ENCODE measurements at regions of chr12 and their contacts with region 1.

Region 1: DNA sequence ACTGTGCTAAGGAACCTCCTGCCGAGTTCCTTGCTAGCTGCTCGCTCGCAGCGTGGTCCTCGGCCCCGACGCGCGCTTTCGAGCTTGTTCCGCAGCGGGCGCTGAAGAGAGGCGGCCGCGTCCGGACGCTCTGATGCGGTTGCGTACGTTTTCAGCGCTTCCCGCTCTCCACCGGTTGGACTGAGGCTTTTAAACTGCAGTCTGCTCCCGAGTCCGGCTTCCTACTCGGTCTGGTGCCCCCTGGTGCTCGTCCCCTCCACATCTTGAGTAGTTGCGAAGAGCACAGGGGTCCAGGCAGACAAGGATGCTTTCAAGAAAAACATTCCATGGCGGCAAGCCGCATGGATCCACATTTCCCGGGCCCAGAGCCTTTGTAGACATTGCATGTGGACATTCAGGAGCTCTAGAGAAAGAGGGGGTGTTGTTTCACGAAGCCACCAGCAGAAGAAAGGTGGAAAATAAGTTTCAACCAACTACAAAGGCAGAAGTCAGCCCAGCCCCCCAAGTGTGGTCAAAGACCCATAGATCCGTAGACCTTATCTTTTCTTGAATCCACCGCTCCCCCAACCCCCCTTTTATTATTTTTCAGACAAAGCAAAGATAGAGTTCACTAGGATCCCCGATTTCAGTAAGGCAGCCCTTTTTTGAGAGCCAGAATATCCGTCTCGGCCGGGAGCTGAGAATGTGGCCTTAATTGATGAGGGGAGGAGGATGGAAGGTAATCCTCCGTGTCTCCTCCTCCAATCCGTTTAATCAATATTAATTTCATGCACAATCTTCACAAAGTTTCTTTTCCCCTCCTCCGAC is 984 bp upstream of the WNK1 start:
- DNase-seq: peak; percentile 87
- H3K4me3 Mint-ChIP-seq: no peak overlapping the region
- H3K27ac Mint-ChIP-seq: no peak overlapping the region
- H3K4me1 Mint-ChIP-seq: peaks cover 28% of the 10 kb centered on the region
- H3K27me3 Mint-ChIP-seq: no peaks in the 10 kb centered on the region

Region 2: GRCh38 chr12:389139-390096 is 362.0 kb before region 1 on chr12 and contains the start of gene KDM5A:
- intact Hi-C with region 1: loop called (anchors 1 kb)
- DNase-seq: peak; percentile 86
- H3K4me3 Mint-ChIP-seq: peak within 1 kb of the TSS; percentile 94
- H3K27ac Mint-ChIP-seq: peak within 1 kb of the TSS; percentile 95
- H3K4me1 Mint-ChIP-seq: peaks cover 24% of the 10 kb centered on the region
- H3K27me3 Mint-ChIP-seq: no peaks in the 10 kb centered on the region
- total RNA-seq, gene KDM5A: 76.4 and 77.9 TPM in 2 replicates

Region 3: DNA sequence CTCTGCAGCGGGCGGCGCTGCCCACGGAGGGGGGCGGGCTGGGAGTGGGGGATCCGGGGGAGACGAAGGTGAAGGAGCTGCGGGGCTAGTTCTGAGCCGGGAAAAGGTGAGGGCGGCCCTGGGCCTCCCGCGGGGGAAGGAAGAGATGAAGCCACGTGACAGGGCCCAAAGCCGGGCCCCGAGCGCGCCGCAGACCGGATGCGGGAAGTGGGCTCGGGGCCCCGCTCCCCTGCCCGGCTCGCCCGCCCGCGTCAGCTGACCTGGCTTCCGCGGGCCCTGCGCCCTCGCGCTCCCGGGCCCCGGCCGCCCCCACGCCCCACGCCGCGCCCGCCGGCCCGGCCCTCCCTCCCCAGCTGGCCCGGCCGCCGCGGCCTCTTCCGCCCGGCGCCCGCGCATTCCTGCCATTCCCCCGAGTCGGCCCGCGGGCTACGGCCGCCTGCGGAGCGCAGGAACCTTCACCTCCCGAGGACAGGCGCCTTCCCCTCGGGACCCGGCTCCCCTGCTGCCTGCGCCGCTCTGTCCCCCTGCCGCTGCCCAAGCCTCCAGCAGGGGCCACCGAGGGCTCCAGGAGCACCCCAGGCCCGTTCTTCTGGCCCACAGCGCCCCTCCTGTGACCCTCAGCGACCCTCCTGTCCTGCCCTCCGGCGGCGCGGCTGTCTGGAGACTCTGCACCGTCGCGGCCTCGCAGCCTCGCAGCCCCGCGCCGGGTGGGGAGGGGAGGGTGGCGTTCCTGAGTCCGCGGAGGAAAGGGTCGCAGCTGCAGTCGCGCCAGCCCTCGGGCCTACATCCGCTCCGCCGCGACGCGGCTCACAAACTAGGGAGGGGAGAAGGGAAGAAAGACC is 108.5 kb before region 1 on chr12:
- intact Hi-C with region 1: loop called (anchors 1 kb)
- DNase-seq: peak; percentile 77
- H3K4me3 Mint-ChIP-seq: peak overlapping the region; percentile 68
- H3K27ac Mint-ChIP-seq: peak overlapping the region; percentile 81
- H3K4me1 Mint-ChIP-seq: peaks cover 43% of the 10 kb centered on the region
- H3K27me3 Mint-ChIP-seq: no peaks in the 10 kb centered on the region

Region 4: DNA sequence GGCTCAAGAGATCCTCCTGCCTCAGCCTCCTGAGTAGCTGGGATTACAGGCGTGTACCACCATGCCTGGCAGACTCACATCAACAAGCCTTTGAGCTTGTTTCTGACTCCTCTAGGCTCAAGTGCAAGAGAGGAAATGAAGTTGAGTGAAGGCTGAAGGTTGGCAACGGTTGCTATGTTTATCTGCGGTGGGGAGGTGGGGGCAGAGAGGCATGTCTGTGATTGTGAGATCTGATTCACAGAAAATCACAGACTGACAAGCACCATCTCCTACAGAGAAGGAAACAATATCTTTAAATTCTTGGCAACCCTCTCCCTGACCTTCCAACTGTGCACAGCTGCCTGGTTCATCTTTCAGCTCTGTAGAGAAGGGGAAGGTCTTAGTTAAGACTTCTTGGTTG is 66.0 kb before region 1 on chr12:
- intact Hi-C with region 1: loop called (anchors 2 kb)
- DNase-seq: peak; percentile 78
- H3K4me3 Mint-ChIP-seq: peak overlapping the region; percentile 17
- H3K27ac Mint-ChIP-seq: peak overlapping the region; percentile 81
- H3K4me1 Mint-ChIP-seq: peaks cover 32% of the 10 kb centered on the region
- H3K27me3 Mint-ChIP-seq: peaks cover 3% of the 10 kb centered on the region

Region 5: DNA sequence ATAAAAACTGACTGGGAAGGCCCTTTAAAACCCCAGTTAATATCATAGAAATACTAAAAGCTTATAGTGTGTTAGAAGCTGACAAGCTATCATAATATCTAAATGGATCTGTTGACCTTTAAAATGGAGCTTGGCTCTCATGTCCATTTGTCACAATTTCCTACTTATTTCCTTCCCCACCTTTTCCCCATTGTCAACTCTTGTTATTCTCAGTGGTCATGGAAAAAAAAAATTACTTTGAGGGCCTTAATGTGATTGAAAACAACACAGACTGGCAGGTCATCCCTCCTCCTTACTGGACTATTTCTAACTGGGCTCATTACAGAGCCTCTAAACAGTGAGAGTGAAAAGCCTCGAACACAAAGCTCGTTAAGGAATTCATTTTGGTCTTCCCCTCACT is 12.7 kb before region 1 on chr12:
- intact Hi-C with region 1: loop called (anchors 1 kb)
- DNase-seq: no peak
- H3K4me3 Mint-ChIP-seq: no peak overlapping the region
- H3K27ac Mint-ChIP-seq: no peak overlapping the region
- H3K4me1 Mint-ChIP-seq: peaks cover 21% of the 10 kb centered on the region
- H3K27me3 Mint-ChIP-seq: no peaks in the 10 kb centered on the region

Region 6: GRCh38 chr12:810671-811415 is 59.4 kb after region 1 on chr12:
- intact Hi-C with region 1: loop called (anchors 2 kb)
- DNase-seq: no peak
- H3K4me3 Mint-ChIP-seq: no peak overlapping the region
- H3K27ac Mint-ChIP-seq: peak overlapping the region; percentile 18
- H3K4me1 Mint-ChIP-seq: peaks cover 55% of the 10 kb centered on the region
- H3K27me3 Mint-ChIP-seq: no peaks in the 10 kb centered on the region

Region 7: GRCh38 chr12:1690578-1691122 is 939.3 kb after region 1 on chr12 and contains the start of gene ADIPOR2:
- intact Hi-C with region 1: loop called (anchors 10 kb)
- DNase-seq: peak; percentile 94
- H3K4me3 Mint-ChIP-seq: peak within 1 kb of the TSS; percentile 100
- H3K27ac Mint-ChIP-seq: peak within 1 kb of the TSS; percentile 99
- H3K4me1 Mint-ChIP-seq: peaks cover 36% of the 10 kb centered on the region
- H3K27me3 Mint-ChIP-seq: peaks cover 14% of the 10 kb centered on the region
- total RNA-seq, gene ADIPOR2: 69.2 and 81.0 TPM in 2 replicates